Activated naive CD4-positive, alpha-beta T cell treated with anti-CD3 and anti-CD28 coated beads for 36 hours (primary cell): ENCODE measurements at regions of chr7 and their contacts with region 1.

Region 1: GRCh38 chr7:116211006-116211912 is 920 bp downstream of the TES start:
- DNase-seq: peak; percentile 87
- H3K4me3 Mint-ChIP-seq: peak overlapping the region; percentile 87
- H3K27ac Mint-ChIP-seq: peak overlapping the region; percentile 97
- H3K4me1 Mint-ChIP-seq: peaks cover 42% of the 10 kb centered on the region
- H3K27me3 Mint-ChIP-seq: no peaks in the 10 kb centered on the region

Region 2: DNA sequence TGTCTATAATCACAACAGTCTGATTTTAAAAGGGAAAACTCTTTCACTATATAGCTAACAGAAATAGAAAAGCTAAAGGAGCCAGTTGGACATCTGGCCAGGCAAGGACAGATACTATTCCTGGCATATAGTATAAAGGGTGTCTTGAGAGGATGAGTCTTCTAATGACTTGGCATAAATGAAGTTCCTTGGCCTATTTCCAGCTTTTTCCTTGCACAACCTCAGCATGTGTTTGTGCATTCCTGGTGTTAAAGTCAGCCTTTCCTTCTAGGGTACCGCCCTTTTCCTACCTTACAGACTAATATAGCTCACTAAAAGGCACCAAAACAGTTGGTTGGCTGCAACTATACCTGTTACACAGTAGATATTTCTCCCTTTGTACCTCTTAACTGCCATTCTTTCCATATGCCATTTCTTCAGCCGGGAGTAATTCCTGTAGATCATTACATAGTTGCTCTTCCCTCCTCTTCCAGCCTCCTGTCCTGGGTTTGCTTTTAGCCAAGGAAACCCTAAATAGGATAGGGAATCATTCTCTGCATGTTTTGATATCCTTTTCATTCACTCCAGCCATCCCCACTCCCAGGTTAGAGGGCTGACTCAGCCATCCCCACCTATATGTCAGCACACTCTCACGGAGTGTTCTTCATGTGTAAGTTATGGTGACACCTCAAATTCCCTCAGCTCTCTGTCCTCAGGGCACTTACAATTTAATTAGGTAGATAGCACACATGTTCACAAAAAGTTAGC is 1391.5 kb before region 1 on chr7:
- CTCF ChIA-PET with region 1: no interaction called
- intact Hi-C with region 1: loop called (anchors 10 kb)
- DNase-seq: no peak
- H3K4me3 Mint-ChIP-seq: no peak overlapping the region
- H3K27ac Mint-ChIP-seq: no peak overlapping the region
- H3K4me1 Mint-ChIP-seq: peaks cover 27% of the 10 kb centered on the region
- H3K27me3 Mint-ChIP-seq: peaks cover 7% of the 10 kb centered on the region

Region 3: DNA sequence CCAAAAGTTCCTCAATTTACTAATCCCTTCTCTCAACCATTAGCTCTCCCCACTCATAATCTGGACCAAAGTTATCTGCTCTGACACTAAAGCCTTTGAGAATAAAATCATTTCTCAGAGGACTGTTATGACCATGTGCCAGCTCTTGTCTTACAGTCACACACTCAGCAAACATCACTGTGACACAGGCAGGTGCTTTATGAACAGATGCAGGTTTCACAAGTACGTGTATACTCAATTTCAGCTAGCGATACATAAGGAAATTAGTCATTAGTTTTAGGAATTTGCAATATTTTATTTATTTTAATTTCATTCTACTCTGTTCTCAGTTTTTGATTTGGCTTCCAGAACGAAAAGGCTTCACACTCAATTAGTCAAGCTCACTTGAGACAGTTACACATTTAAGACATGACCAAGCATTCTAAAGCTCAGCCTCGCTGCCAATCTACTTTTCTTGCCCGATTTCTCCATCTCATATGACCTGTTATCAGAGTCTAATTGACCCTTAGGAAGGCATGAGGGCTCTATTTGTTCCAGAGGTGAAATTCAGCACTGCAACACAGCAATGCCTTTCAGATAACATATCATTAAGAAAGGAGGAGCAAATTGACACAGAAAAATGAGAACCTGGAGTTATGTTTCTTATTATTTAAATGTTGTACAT is 257.5 kb before region 1 on chr7:
- CTCF ChIA-PET with region 1: no interaction called
- intact Hi-C with region 1: no loop called
- DNase-seq: no peak
- H3K4me3 Mint-ChIP-seq: no peak overlapping the region
- H3K27ac Mint-ChIP-seq: no peak overlapping the region
- H3K4me1 Mint-ChIP-seq: no peaks in the 10 kb centered on the region
- H3K27me3 Mint-ChIP-seq: no peaks in the 10 kb centered on the region

Region 4: DNA sequence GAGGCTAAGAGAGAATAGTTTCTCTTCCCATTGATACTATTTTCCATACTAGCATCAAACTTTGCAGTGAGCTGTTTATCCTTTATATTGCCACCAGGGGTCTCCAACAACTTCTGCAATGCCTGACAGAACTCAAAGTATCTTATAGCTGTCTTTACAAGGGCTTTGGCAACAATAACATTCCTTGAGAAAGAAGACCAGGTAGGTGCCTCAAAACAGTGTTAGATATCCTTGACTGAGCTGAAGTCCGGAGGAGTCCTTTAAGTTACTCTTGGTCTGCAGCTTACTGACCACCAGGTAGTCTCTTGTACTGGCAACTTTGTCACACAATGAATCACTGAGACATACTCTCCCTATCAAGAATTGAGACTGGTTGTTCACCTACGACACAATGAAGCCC is 31.0 kb before region 1 on chr7:
- CTCF ChIA-PET with region 1: interaction called, 17 read pairs
- intact Hi-C with region 1: loop called (anchors 2 kb)
- DNase-seq: peak; percentile 20
- H3K4me3 Mint-ChIP-seq: no peak overlapping the region
- H3K27ac Mint-ChIP-seq: no peak overlapping the region
- H3K4me1 Mint-ChIP-seq: no peaks in the 10 kb centered on the region
- H3K27me3 Mint-ChIP-seq: no peaks in the 10 kb centered on the region

Region 5: GRCh38 chr7:116236020-116236630 is 24.9 kb after region 1 on chr7:
- CTCF ChIA-PET with region 1: interaction called, 27 read pairs
- intact Hi-C with region 1: loop called (anchors 1 kb)
- DNase-seq: peak; percentile 73
- H3K4me3 Mint-ChIP-seq: no peak overlapping the region
- H3K27ac Mint-ChIP-seq: no peak overlapping the region
- H3K4me1 Mint-ChIP-seq: peaks cover 69% of the 10 kb centered on the region
- H3K27me3 Mint-ChIP-seq: no peaks in the 10 kb centered on the region

Region 6: GRCh38 chr7:116367221-116367813 is 156.1 kb after region 1 on chr7:
- CTCF ChIA-PET with region 1: no interaction called
- intact Hi-C with region 1: no loop called
- DNase-seq: no peak
- H3K4me3 Mint-ChIP-seq: no peak overlapping the region
- H3K27ac Mint-ChIP-seq: no peak overlapping the region
- H3K4me1 Mint-ChIP-seq: no peaks in the 10 kb centered on the region
- H3K27me3 Mint-ChIP-seq: peaks cover 12% of the 10 kb centered on the region

Region 7: DNA sequence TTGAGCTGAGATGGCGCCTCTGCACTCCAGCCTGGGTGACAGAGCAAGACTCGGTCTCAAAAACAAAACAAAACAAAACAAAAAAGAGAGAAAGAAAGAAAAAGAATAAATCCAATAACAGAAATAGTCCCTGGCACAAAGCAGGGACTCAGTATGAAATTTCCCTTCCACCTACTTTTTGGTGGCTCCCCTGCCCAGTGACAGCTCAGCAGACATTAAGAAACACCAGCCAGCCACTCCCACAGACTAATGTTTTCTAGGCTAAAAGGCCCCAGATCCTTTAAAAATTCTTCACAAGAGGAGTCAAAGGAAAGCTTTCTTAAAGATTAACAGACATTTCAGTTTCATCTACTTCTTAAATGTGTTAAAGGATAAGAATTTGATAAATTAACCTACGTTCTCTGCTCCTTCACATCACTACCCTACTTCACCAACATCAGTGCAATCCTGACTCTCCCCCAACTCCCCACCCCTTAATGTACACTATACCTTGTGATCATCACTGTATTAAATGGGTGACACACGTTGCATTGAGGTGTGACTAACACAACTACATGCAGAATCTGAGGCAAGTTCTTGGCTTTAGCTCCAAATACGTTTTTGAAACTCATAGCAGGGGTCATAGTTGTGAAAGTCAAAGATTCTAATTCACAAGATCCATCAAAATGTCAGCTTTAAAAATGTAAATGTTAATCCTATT is 173.8 kb after region 1 on chr7:
- CTCF ChIA-PET with region 1: no interaction called
- intact Hi-C with region 1: no loop called
- DNase-seq: no peak
- H3K4me3 Mint-ChIP-seq: no peak overlapping the region
- H3K27ac Mint-ChIP-seq: no peak overlapping the region
- H3K4me1 Mint-ChIP-seq: no peaks in the 10 kb centered on the region
- H3K27me3 Mint-ChIP-seq: peaks cover 5% of the 10 kb centered on the region

Region 8: DNA sequence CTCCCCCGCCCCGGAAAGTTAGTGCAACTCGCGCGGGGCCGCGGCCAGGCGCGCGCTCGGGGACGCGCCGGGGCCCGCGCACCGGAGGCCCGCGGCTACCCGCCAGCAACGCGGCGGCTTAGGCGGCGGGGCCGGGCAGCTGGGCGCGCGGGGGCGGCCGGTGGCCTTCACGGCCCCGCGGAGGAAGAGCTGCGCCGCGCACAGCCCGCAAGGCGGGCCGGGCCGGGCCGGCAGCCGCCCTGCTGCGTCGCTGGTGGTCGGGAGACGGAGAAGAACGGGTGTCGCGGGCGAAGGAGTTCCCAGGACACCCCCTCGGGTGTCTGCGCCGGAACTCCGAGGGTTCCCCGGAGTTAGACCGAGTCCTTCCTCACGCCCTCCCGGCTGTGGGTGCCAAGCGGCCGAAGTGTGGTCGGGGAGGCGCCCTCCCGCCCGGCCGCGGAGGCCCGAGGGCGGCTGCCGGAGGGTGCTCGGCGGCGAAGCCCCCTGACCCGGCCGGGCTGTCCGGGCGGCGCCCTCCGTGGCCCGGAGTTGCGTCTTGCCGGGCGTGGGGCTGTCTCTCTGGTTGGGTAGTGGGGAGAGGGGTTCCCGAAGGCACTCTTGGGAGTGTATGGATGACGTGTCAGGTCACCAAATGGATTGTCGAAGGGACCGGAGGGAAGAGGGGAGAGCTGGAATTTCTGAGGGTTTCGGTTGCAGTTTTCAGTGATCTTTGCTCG is 742.6 kb after region 1 on chr7:
- CTCF ChIA-PET with region 1: no interaction called
- intact Hi-C with region 1: loop called (anchors 10 kb)
- DNase-seq: peak; percentile 40
- H3K4me3 Mint-ChIP-seq: peak overlapping the region; percentile 92
- H3K27ac Mint-ChIP-seq: peak overlapping the region; percentile 87
- H3K4me1 Mint-ChIP-seq: peaks cover 21% of the 10 kb centered on the region
- H3K27me3 Mint-ChIP-seq: no peaks in the 10 kb centered on the region

Region 9: GRCh38 chr7:118183786-118184564 is 1972.7 kb after region 1 on chr7 and contains the start of gene LSM8:
- CTCF ChIA-PET with region 1: no interaction called
- intact Hi-C with region 1: loop called (anchors 10 kb)
- DNase-seq: peak; percentile 98
- H3K4me3 Mint-ChIP-seq: peak within 1 kb of the TSS; percentile 95
- H3K27ac Mint-ChIP-seq: peak within 1 kb of the TSS; percentile 98
- H3K4me1 Mint-ChIP-seq: peaks cover 32% of the 10 kb centered on the region
- H3K27me3 Mint-ChIP-seq: no peaks in the 10 kb centered on the region
- total RNA-seq, gene LSM8: 39.1 to 43.3 TPM